ENCODE measurements at regions of chr17 and their contacts with region 1.

Region 1: DNA sequence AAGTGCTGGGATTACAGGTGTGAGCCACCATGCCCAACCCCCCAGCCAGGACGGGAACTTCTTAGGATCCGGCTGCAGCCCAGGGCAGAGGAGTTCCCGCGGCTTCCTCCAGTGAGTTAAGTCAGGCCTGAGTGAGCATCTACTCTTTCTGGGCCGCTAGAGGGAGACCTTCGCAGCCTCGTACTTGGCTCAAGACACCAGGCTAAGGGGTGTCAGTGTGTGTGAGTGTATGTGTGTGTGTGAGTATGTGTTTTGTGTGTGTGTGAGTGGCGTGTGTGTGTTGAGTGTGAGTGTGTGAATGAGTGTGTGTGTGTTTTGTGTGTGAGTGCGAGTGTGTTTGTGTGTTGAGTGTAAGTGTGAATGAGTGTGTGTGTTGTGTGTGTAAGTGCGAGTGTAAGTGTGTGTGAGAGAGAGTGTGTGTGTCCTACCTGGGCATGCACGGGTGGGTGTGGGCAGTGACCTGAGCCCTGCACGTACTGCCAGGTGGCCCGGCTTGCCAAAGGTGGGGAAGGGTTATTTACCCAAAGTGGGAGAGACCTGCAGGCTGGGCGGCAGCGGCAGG is 58.5 kb downstream of the TMEM235 start:
- DNase-seq: peak; percentile 88
- ATAC-seq: peak; percentile 99
- H3K4me3 ChIP-seq: no peak overlapping the region
- H3K27ac ChIP-seq: no peak overlapping the region
- H3K4me1 ChIP-seq: peaks cover 2 to 22% of the 10 kb centered on the region in 2 experiments; a peak in 2 of 4 replicates
- H3K27me3 ChIP-seq: no peaks in the 10 kb centered on the region
- CTCF ChIP-seq: peak; percentile 92 to 98 (median 92)
- POLR2A ChIP-seq: no peak
- RAD21 ChIP-seq: peak; percentile 95

Region 2: DNA sequence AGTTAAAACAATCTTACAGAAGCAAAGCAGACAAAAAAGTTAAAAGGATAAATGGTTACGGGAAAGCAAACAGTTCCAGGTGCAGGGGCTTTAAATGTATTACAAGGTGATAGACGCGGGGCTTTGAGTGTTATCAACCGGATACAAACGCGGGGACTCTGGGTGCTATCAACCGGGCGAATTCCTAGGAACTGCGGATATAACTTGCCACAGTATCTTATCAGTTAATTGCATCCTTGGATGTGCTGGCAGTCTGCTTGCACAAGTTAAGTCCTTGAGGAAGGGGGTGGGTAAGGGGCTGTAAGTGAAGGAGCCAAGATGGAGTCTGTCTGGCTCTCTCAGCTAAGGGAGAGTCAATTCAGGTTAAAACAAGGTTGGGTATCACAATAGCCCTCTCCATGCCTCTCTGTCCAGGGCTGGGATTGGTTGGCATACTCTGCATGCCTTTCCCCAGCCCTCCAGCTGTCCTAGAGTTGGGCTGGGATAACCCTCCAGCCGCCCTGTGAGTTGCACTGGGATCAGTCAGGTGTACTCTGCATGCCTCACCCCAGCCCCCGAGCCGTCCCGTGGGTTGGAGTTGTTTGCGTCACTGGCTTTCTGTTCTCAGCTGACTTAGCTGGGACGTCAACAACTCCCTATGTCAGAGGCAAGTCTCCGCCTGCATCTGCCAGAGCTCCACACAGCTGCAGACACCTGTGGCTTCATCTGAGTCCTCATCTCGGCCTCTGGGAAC is 17.5 kb before region 1 on chr17:
- CTCF ChIA-PET with region 1: no interaction called
- POLR2A ChIA-PET with region 1: no interaction called
- RAD21 ChIA-PET with region 1: no interaction called
- intact Hi-C with region 1: no loop called
- DNase-seq: no peak
- ATAC-seq: peak; percentile 67
- H3K4me3 ChIP-seq: no peak overlapping the region
- H3K27ac ChIP-seq: no peak overlapping the region
- H3K4me1 ChIP-seq: peaks cover 0 to 8% of the 10 kb centered on the region in 2 experiments; a peak in 1 of 4 replicates
- H3K27me3 ChIP-seq: no peaks in the 10 kb centered on the region
- CTCF ChIP-seq: no peak
- POLR2A ChIP-seq: no peak
- RAD21 ChIP-seq: no peak

Region 3: DNA sequence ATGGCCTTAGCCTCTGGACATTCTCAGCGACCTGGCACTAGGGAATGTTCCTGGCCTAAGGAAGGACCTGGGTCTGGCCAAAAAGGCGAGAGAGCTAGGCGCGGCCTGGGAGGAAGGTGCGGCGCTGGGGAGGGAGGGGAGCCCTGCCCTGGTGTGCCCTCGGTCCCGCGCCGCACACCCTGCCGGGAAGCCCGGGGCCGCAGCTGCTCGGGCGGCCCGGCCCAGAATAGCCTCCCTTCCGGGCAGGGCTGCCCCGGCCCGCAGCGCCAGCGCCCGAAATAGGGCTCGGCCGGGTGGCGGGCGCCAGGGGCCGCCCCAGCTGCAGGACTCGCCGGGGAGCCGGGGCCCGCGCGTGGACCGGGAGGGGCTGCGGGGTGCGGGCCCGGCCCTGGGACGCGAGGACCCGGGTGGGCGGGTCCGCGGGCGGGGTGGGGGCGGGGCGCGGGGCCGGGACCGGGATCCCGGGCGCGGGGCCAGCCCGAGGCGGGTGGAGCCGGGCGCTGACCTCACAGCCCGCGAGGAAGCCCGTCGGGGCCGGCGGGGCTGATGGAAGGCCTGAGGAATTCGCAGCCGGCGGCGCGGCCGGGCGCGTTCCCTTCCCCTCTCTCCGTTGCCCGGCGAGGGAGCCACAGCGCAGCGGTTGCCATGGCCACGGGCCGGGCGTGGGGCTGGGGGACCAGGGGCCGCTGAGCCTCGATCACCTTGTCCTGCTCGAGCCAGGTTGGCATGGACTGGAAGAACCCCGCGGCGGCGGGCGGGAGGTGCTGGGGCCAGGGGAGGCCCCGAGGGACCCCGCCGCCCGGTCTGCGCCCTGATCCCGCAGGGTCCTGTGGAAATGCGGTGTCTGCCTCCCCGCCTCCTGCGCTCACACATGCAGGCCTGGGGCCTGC is 51.9 kb after region 1 on chr17:
- CTCF ChIA-PET with region 1: interaction called, 3 read pairs
- POLR2A ChIA-PET with region 1: no interaction called
- RAD21 ChIA-PET with region 1: interaction called, 3 read pairs
- intact Hi-C with region 1: loop called (anchors 1 kb)
- DNase-seq: no peak
- ATAC-seq: peak; percentile 43
- H3K4me3 ChIP-seq: peak overlapping the region; percentile 42 to 62
- H3K27ac ChIP-seq: peak overlapping the region; percentile 98
- H3K4me1 ChIP-seq: peaks cover 54 to 98% of the 10 kb centered on the region in 2 experiments
- H3K27me3 ChIP-seq: no peaks in the 10 kb centered on the region
- CTCF ChIP-seq: no peak
- POLR2A ChIP-seq: no peak
- RAD21 ChIP-seq: no peak

Region 4: GRCh38 chr17:78421484-78422266 is 131.8 kb after region 1 on chr17:
- CTCF ChIA-PET with region 1: interaction called, 15 read pairs
- POLR2A ChIA-PET with region 1: interaction called, 4 read pairs
- RAD21 ChIA-PET with region 1: interaction called in 1 of 2 experiments, 4 read pairs
- intact Hi-C with region 1: loop called (anchors 1 kb)
- DNase-seq: peak; percentile 51
- ATAC-seq: peak; percentile 95
- H3K4me3 ChIP-seq: no peak overlapping the region
- H3K27ac ChIP-seq: no peak overlapping the region
- H3K4me1 ChIP-seq: no peaks in the 10 kb centered on the region
- H3K27me3 ChIP-seq: no peaks in the 10 kb centered on the region
- CTCF ChIP-seq: peak; percentile 98 to 100 (median 100)
- POLR2A ChIP-seq: no peak
- RAD21 ChIP-seq: peak; percentile 98